AG04450 (cell line): ENCODE measurements at regions of chr5 and their contacts with region 1.

Region 1: GRCh38 chr5:150161242-150162141 is 5.1 kb upstream of the CDX1 start:
- DNase-seq: no peak
- H3K4me3 ChIP-seq: no peak overlapping the region
- H3K27ac ChIP-seq: no peak overlapping the region
- H3K27me3 ChIP-seq: no peaks in the 10 kb centered on the region
- CTCF ChIP-seq: peak; percentile 99

Region 2: DNA sequence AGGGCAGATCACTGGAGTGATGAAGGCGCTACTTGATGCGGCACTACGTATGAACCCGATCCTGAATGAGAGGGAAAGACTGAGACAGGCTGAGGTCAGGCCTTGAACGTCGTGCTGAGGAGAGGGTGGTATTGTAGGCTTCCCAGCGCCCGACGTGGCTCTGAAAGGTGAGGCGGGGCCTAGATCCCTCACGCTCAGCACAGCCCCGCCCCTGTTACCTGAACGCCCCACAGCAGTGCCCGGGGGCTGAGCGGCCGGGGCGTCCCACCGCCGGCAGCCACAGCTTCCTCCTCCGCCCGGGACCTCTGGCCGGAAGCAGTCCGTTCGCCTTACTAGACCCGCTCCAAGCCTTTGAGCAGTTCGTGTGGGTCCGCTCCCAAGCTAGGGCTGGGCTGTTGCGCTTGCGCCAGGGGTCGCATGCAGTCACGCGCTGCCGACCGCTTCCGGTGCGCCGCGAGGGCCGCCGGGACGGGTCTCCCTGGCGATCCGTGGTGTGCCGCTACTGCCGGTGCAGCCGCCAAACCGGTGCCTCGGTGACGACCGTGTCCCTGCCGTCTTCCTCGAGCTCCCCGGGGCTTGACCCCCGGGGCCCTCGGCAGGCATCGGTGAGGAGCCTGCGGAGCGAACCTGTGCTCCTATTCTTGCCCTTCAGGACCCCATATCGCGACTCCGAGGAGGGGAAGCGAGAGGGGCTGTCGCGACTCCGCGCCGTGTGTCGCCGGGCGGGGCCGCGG is 161.1 kb before region 1 on chr5 and contains the starts of genes HMGXB3 and TIGD6:
- CTCF ChIA-PET with region 1: no interaction called
- POLR2A ChIA-PET with region 1: no interaction called
- DNase-seq: peak; percentile 88
- H3K4me3 ChIP-seq: peak within 1 kb of the TSS; percentile 89
- H3K27ac ChIP-seq: peak within 1 kb of the TSS; percentile 94
- H3K27me3 ChIP-seq: no peaks in the 10 kb centered on the region
- CTCF ChIP-seq: 0 out of 2 replicates have a peak, but pooled peaks have one; percentile 17
- polyA plus RNA-seq, gene HMGXB3: 35.1 and 37.0 TPM in 2 replicates
- polyA plus RNA-seq, gene TIGD6: 6.5 and 6.7 TPM in 2 replicates

Region 3: GRCh38 chr5:150175076-150175935 is 13.8 kb after region 1 on chr5:
- CTCF ChIA-PET with region 1: interaction called, 17 read pairs
- POLR2A ChIA-PET with region 1: no interaction called
- DNase-seq: no peak
- H3K4me3 ChIP-seq: no peak overlapping the region
- H3K27ac ChIP-seq: no peak overlapping the region
- H3K27me3 ChIP-seq: peaks cover 9% of the 10 kb centered on the region
- CTCF ChIP-seq: peak; percentile 58